IMR-90 (cell line): ENCODE measurements at regions of chr2 and their contacts with region 1.

Region 1: DNA sequence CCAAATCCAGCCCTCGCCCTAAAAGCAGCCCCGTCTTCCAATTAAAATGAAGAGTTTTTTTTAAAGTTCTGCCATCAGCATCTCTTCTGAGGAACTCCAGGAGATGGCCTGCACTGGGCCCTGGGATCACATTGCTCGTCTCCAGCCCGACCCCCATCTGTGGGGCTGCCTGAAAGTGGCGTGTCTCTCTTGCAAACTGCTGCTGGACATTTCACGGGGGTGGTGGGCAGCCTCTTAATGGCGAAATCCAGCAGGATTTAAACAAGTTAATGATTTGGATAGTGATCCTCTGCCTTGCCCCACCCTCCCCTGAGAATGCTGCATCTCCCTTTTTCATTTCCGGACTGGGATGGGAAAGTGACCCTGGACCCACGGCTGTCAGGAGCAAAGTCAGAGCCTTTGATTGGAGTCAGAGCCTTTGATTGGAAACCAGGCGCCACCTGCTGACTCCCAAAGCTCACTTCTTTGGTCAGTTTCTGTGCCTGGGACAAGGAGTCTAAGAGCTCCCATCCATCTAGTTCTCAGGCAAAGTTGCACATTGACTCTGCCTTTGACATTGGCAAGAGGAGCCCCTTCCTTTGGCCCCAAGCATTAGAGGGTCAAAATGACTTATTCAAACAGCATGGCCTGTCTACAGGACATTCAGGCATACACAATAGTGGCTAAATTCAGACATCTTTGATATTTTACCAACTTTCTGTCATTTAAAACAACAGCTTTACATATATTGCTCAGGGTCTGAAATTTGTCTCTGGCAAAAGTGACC is 155.2 kb downstream of the SH3BP4 start:
- DNase-seq: peak; percentile 76
- ATAC-seq: peak; percentile 97
- H3K4me3 ChIP-seq: no peak overlapping the region
- H3K27ac ChIP-seq: no peak overlapping the region
- H3K4me1 ChIP-seq: peaks cover 4% of the 10 kb centered on the region; the same call in 1 of the 2 replicates
- H3K27me3 ChIP-seq: peaks cover 3% of the 10 kb centered on the region
- CTCF ChIP-seq: peak; percentile 80
- POLR2A ChIP-seq: no peak
- RAD21 ChIP-seq: peak; percentile 89

Region 2: DNA sequence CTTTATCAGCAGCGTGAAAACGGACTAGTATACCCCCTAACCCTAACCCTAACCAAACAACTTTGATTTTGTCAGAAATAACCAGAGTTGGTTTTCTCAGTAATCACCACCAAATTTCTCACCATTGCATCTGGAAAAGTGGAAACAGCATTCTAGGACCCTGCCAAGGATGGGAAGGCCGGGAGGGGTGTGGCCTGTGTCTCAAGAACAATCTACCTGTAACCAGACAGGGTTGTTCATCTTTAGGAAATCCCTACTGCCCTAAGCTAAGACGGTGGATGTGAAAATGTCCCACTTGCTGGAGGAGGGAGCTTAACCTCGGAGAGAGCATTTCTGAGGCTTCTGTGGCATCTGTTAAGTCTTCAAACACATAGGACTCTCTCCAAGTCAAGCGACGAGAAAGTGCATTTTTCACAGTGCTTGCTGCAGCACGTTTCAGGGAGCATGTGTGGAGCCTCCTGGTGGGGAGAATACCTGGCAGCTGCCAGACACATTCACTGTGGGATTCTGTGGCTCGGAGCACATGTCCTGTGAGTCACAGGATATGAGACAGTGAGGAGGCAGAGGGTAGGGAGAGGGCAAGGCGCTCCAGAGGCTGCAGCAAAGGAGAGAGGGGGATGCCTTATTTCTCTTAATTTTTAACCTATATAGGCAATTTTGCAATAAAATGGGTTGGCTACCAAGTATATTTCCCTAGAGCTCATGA is 849.0 kb before region 1 on chr2:
- CTCF ChIA-PET with region 1: no interaction called
- POLR2A ChIA-PET with region 1: no interaction called
- dilution Hi-C with region 1: no loop called
- in situ Hi-C with region 1: loop called (anchors 25 kb)
- intact Hi-C with region 1: no loop called
- DNase-seq: peak; percentile 99
- ATAC-seq: peak; percentile 97
- H3K4me3 ChIP-seq: no peak overlapping the region
- H3K27ac ChIP-seq: peak overlapping the region; percentile 6
- H3K4me1 ChIP-seq: peaks cover 10% of the 10 kb centered on the region
- H3K27me3 ChIP-seq: no peaks in the 10 kb centered on the region
- CTCF ChIP-seq: peak; percentile 81
- POLR2A ChIP-seq: no peak
- RAD21 ChIP-seq: peak; percentile 77

Region 3: GRCh38 chr2:234517971-234518370 is 589.1 kb before region 1 on chr2:
- CTCF ChIA-PET with region 1: no interaction called
- POLR2A ChIA-PET with region 1: no interaction called
- dilution Hi-C with region 1: no loop called
- in situ Hi-C with region 1: no loop called
- intact Hi-C with region 1: loop called (anchors 1 kb)
- DNase-seq: no peak
- ATAC-seq: no peak
- H3K4me3 ChIP-seq: no peak overlapping the region
- H3K27ac ChIP-seq: no peak overlapping the region
- H3K4me1 ChIP-seq: peaks cover 2% of the 10 kb centered on the region; the same call in 1 of the 2 replicates
- H3K27me3 ChIP-seq: peaks cover 12% of the 10 kb centered on the region
- CTCF ChIP-seq: no peak
- POLR2A ChIP-seq: no peak
- RAD21 ChIP-seq: no peak

Region 4: GRCh38 chr2:234823877-234824376 is 283.1 kb before region 1 on chr2:
- CTCF ChIA-PET with region 1: no interaction called
- POLR2A ChIA-PET with region 1: no interaction called
- dilution Hi-C with region 1: no loop called
- in situ Hi-C with region 1: no loop called
- intact Hi-C with region 1: loop called (anchors 5 kb)
- DNase-seq: peak; percentile 98
- ATAC-seq: peak; percentile 92
- H3K4me3 ChIP-seq: no peak overlapping the region
- H3K27ac ChIP-seq: peak overlapping the region; percentile 95
- H3K4me1 ChIP-seq: peaks cover 14% of the 10 kb centered on the region
- H3K27me3 ChIP-seq: no peaks in the 10 kb centered on the region
- CTCF ChIP-seq: no peak
- POLR2A ChIP-seq: no peak
- RAD21 ChIP-seq: no peak; the same call in 1 of the 2 replicates

Region 5: DNA sequence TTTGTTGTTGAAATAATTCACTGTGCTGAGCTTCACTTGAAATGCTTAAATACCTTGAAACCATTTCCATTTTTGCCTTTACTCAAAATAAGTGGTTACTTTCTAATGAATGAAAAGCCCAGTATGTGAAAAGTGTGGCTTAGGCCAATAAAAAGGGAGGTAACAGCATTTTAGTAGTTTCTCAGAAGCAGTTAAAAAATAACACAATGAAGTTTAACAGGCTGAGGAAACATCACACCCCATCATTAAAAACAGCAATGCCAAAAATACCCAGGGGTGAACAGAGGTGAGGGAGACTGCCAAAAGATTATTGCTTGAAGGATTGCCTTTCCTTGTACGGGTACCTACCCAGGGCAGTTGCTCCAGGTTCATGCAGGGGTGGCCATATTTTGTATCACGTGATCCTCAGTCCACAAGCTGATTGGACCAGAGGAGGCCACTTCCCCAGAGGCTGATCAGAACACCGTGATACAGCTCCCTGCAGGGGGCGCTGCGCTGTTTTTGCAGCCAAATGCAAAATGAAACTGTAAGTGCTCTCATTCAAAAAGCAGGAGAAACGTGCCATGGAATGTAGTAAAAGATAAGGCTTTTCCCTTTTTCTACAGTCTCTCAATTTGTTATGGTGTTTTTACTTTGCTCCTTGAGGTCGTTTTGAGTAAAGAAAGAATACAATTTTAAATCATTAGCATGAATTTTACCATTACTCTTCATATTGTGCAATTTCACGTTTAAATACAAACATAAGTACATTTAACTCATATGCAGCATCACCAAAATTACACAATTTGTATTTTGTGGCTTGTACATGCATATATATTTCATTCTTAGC is 225.4 kb before region 1 on chr2:
- CTCF ChIA-PET with region 1: interaction called, 13 read pairs
- POLR2A ChIA-PET with region 1: no interaction called
- dilution Hi-C with region 1: no loop called
- in situ Hi-C with region 1: loop called (anchors 10 kb)
- intact Hi-C with region 1: loop called (anchors 2 kb)
- DNase-seq: peak; percentile 97
- ATAC-seq: peak; percentile 88
- H3K4me3 ChIP-seq: peak overlapping the region; percentile 12; the same call in 1 of the 2 replicates
- H3K27ac ChIP-seq: peak overlapping the region; percentile 96
- H3K4me1 ChIP-seq: peaks cover 13% of the 10 kb centered on the region
- H3K27me3 ChIP-seq: no peaks in the 10 kb centered on the region
- CTCF ChIP-seq: peak; percentile 91
- POLR2A ChIP-seq: no peak
- RAD21 ChIP-seq: peak; percentile 64

Region 6: GRCh38 chr2:234963773-234964615 is 143.1 kb before region 1 on chr2:
- CTCF ChIA-PET with region 1: no interaction called
- POLR2A ChIA-PET with region 1: no interaction called
- dilution Hi-C with region 1: no loop called
- in situ Hi-C with region 1: loop called (anchors 10 kb)
- intact Hi-C with region 1: loop called (anchors 5 kb)
- DNase-seq: peak; percentile 74
- ATAC-seq: peak; percentile 38
- H3K4me3 ChIP-seq: no peak overlapping the region
- H3K27ac ChIP-seq: peak overlapping the region; percentile 73
- H3K4me1 ChIP-seq: peaks cover 38% of the 10 kb centered on the region
- H3K27me3 ChIP-seq: no peaks in the 10 kb centered on the region
- CTCF ChIP-seq: no peak
- POLR2A ChIP-seq: no peak
- RAD21 ChIP-seq: no peak

Region 7: GRCh38 chr2:235070063-235070706 is 36.9 kb before region 1 on chr2:
- CTCF ChIA-PET with region 1: no interaction called
- POLR2A ChIA-PET with region 1: no interaction called
- dilution Hi-C with region 1: no loop called
- in situ Hi-C with region 1: no loop called
- intact Hi-C with region 1: no loop called
- DNase-seq: no peak
- ATAC-seq: no peak
- H3K4me3 ChIP-seq: no peak overlapping the region
- H3K27ac ChIP-seq: no peak overlapping the region
- H3K4me1 ChIP-seq: no peaks in the 10 kb centered on the region; the same call in 1 of the 2 replicates
- H3K27me3 ChIP-seq: no peaks in the 10 kb centered on the region
- CTCF ChIP-seq: no peak
- POLR2A ChIP-seq: no peak
- RAD21 ChIP-seq: no peak

Region 8: DNA sequence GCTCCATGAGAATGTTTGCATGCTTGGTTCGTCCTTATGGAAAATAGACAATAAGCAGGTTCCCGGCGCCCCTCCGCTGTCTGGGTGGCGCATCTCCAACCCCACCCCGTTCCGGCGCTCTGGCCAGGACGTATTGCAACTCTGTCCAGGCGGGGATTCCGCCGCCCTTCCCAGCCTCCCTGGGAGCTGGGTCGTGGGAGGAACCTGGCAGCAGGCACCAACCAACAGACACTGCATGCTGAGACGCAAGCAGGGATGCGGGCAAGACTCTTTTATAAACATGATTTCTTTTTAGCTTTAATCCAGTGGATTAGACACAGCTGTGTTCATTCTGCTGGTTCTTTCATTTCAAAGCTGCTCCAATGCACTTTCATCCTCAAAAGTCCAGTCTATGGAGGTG is 84.9 kb after region 1 on chr2:
- CTCF ChIA-PET with region 1: no interaction called
- POLR2A ChIA-PET with region 1: no interaction called
- dilution Hi-C with region 1: no loop called
- in situ Hi-C with region 1: no loop called
- intact Hi-C with region 1: no loop called
- DNase-seq: no peak
- ATAC-seq: no peak
- H3K4me3 ChIP-seq: no peak overlapping the region
- H3K27ac ChIP-seq: no peak overlapping the region
- H3K4me1 ChIP-seq: no peaks in the 10 kb centered on the region
- H3K27me3 ChIP-seq: peaks cover 47% of the 10 kb centered on the region
- CTCF ChIP-seq: no peak
- POLR2A ChIP-seq: no peak
- RAD21 ChIP-seq: no peak

Region 9: DNA sequence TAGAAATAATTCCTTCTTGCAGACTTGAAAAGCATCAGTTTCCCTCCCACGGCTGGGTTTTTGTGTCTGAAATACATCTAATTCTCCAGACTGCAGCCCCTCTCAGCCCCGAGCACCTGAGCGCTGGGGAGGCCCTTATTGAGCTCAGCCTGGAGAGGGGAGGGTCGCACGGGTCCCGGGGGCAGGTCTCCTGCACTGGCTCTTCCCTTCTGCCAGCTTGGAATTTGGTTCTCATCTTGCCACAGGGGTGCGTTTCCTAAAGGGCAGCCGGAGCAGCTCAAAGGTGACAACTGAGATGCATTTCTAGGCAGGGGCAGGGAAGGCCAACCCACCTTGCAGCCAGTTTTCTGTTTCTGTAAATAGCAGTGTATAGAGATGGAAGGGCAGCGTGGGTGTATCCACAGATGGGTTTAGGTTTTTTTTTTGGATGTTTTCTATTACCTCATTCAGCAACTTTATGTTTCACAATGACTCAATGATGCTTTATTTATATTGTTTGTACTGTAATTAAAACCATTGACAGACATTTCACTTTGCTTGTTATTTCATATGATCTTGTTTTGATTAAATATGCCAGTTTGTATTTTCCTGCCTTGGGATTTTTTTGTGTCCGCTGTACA is 1024.1 kb after region 1 on chr2:
- CTCF ChIA-PET with region 1: no interaction called
- POLR2A ChIA-PET with region 1: no interaction called
- dilution Hi-C with region 1: no loop called
- in situ Hi-C with region 1: no loop called
- intact Hi-C with region 1: no loop called
- DNase-seq: no peak
- ATAC-seq: no peak
- H3K4me3 ChIP-seq: no peak overlapping the region
- H3K27ac ChIP-seq: no peak overlapping the region
- H3K4me1 ChIP-seq: no peaks in the 10 kb centered on the region
- H3K27me3 ChIP-seq: no peaks in the 10 kb centered on the region
- CTCF ChIP-seq: no peak
- POLR2A ChIP-seq: no peak
- RAD21 ChIP-seq: no peak